ENCODE measurements at regions of chr4 and their contacts with region 1.

Region 1: DNA sequence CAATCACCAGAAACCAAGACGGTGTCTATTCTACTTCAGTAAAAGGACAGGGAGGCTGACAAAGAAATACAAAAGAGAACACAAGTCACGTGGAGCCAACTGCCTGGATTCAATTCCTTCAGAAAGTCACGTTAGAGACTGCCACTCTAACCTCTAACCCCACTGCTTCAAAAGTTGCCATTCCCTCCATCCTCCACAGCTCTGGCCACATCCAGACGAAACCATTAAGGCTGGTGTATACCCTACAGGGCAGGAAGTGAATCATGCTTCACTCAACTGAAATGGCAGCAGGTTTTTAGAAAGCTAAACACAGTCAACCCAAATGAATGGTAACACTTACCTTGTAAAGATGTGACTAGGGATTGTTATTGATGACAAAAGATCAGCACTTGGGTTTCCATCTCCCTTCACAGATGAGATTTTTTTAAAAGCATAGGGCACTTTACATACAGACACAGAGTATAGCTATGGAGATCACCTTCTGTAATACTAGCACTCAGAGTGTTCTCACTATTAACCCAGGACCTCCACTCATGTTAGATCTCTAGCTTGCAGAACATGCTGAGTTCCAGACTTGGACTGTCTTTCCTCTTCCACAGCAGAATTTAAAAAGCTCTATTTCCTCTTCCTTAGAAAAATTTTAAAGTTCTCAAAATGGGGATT is 37.4 kb downstream of the MAML3 start:
- DNase-seq: no peak
- ATAC-seq: peak; percentile 79
- H3K4me3 ChIP-seq: no peak overlapping the region
- H3K4me3 Mint-ChIP-seq: peak overlapping the region in 6 of 10 donors; percentile 3 to 37 (median 18)
- H3K27ac ChIP-seq: no peak overlapping the region
- H3K27ac Mint-ChIP-seq: peak overlapping the region in 6 of 9 donors; percentile 6 to 60 (median 24)
- H3K4me1 ChIP-seq: peaks cover 0 to 7% of the 10 kb centered on the region in 2 donors
- H3K4me1 Mint-ChIP-seq: peaks cover 15 to 23% (median 18%) of the 10 kb centered on the region in 7 donors
- H3K27me3 ChIP-seq: no peaks in the 10 kb centered on the region
- H3K27me3 Mint-ChIP-seq: peaks cover 0 to 14% (median 0%) of the 10 kb centered on the region in 5 donors

Region 2: GRCh38 chr4:140103676-140104075 is 12.9 kb before region 1 on chr4:
- CTCF ChIA-PET with region 1: no interaction called
- POLR2A ChIA-PET with region 1: interaction called, 3 read pairs
- intact Hi-C with region 1: loop called in 1 of 2 experiments (anchors 1 kb)
- DNase-seq: peak in 1 of 9 donors; percentile 41
- ATAC-seq: peak; percentile 83
- H3K4me3 ChIP-seq: no peak overlapping the region
- H3K4me3 Mint-ChIP-seq: peak overlapping the region in 1 of 10 donors; percentile 59
- H3K27ac ChIP-seq: no peak overlapping the region
- H3K27ac Mint-ChIP-seq: peak overlapping the region in 2 of 9 donors; percentile 61 to 72
- H3K4me1 ChIP-seq: peaks cover 0 to 12% of the 10 kb centered on the region in 2 donors
- H3K4me1 Mint-ChIP-seq: peaks cover 19 to 59% (median 31%) of the 10 kb centered on the region in 7 donors
- H3K27me3 ChIP-seq: no peaks in the 10 kb centered on the region
- H3K27me3 Mint-ChIP-seq: peaks cover 0 to 18% (median 0%) of the 10 kb centered on the region in 5 donors

Region 3: DNA sequence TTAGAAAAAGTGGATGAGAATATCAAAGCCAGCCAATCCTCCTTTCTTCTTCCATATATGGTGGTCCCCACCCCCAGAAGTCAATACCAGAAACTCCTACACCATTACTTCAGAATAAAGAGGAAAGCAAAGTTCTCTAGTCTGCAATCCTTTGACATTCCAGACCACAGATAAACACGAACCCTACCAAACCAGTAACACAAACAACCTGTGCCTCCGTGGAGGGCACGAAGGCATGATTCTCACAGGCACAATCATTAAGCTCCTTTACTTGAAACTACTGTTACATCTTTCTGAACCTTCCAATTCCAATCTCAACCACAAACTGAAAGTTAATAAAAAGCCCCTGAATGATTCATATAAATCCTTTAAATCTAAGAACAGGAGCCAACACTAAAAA is 21.1 kb after region 1 on chr4:
- CTCF ChIA-PET with region 1: no interaction called
- POLR2A ChIA-PET with region 1: no interaction called
- intact Hi-C with region 1: loop called in 1 of 2 experiments (anchors 2 kb)
- DNase-seq: no peak
- ATAC-seq: no peak
- H3K4me3 ChIP-seq: no peak overlapping the region
- H3K4me3 Mint-ChIP-seq: peak overlapping the region in 1 of 10 donors; percentile 32
- H3K27ac ChIP-seq: no peak overlapping the region
- H3K27ac Mint-ChIP-seq: peak overlapping the region in 2 of 9 donors; percentile 28 to 32
- H3K4me1 ChIP-seq: no peaks in the 10 kb centered on the region
- H3K4me1 Mint-ChIP-seq: peaks cover 9 to 22% (median 13%) of the 10 kb centered on the region in 7 donors
- H3K27me3 ChIP-seq: no peaks in the 10 kb centered on the region
- H3K27me3 Mint-ChIP-seq: peaks cover 0 to 59% (median 0%) of the 10 kb centered on the region in 5 donors